Breast epithelium (tissue), 4 donors: ENCODE measurements at regions of chr21 and their contacts with region 1.

Region 1: GRCh38 chr21:23861911-23862504 is 1745.3 kb downstream of the MRPL39 start:
- DNase-seq: no peak
- H3K4me3 ChIP-seq: no peak overlapping the region
- H3K27ac ChIP-seq: no peak overlapping the region
- H3K4me1 ChIP-seq: no peaks in the 10 kb centered on the region
- H3K27me3 ChIP-seq: no peaks in the 10 kb centered on the region
- CTCF ChIP-seq: no peak
- POLR2A ChIP-seq: no peak

Region 2: GRCh38 chr21:23162198-23162946 is 699.6 kb before region 1 on chr21:
- intact Hi-C with region 1: loop called (anchors 5 kb)
- DNase-seq: no peak
- H3K4me3 ChIP-seq: no peak overlapping the region
- H3K27ac ChIP-seq: no peak overlapping the region
- H3K4me1 ChIP-seq: no peaks in the 10 kb centered on the region
- H3K27me3 ChIP-seq: no peaks in the 10 kb centered on the region
- CTCF ChIP-seq: no peak
- POLR2A ChIP-seq: no peak

Region 3: DNA sequence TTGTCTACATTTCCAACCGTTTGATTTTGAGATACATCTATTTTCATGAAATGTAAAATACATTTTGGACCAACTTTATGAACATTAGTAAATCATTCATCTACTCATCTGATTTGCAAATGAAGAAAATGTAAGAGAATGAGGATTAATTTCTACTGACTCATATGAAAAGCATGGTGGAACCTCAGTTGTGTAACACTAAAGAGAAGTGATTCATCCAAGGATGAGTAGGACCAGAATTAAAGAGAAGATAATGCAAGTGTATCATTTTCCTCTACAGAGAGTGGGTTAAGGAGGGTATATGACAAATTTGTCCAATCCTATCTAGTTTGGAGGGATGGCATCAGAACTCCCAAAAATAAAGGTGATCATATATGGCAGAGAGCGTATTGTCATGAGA is 222.3 kb before region 1 on chr21:
- intact Hi-C with region 1: loop called (anchors 5 kb)
- DNase-seq: no peak
- H3K4me3 ChIP-seq: no peak overlapping the region
- H3K27ac ChIP-seq: no peak overlapping the region
- H3K4me1 ChIP-seq: no peaks in the 10 kb centered on the region
- H3K27me3 ChIP-seq: no peaks in the 10 kb centered on the region
- CTCF ChIP-seq: no peak
- POLR2A ChIP-seq: no peak

Region 4: GRCh38 chr21:24200052-24200451 is 338.0 kb after region 1 on chr21:
- intact Hi-C with region 1: no loop called
- DNase-seq: no peak
- H3K4me3 ChIP-seq: no peak overlapping the region
- H3K27ac ChIP-seq: no peak overlapping the region
- H3K4me1 ChIP-seq: no peaks in the 10 kb centered on the region
- H3K27me3 ChIP-seq: no peaks in the 10 kb centered on the region
- CTCF ChIP-seq: no peak
- POLR2A ChIP-seq: no peak